ENCODE measurements at regions of chr6 and their contacts with region 1.

Region 1: DNA sequence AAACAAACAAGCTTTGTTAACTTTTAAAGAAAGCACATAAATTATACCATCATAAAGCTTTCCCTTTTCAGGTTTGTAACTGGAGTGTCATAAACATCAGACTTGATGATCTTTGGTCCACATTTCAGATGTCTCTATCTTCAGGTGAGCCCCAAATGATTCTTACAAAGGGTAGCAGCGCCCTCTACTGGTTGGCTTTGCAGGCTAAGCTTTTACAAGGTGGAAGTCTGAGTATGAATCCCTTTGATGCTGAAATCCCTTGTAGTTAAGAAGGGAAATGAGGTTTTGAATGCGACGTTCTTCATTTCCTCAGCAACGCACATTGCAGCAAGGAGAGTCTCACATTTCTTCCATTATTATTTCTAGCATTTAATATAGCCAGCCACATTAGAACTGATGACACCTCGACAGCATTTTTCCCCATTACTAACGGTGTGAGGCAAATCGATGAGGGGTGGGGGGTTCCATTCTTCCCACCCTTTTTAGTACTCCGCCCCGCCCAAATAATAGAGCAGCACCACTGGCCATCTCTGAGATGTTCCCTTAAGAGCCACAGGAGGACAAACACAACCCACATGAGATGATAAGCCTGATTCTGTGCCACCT is 126.3 kb upstream of the NT5E start:
- DNase-seq: peak; percentile 46 to 72
- H3K4me3 ChIP-seq: no peak overlapping the region
- H3K27ac ChIP-seq: no peak overlapping the region
- H3K4me1 ChIP-seq: no peaks in the 10 kb centered on the region
- H3K27me3 ChIP-seq: no peaks in the 10 kb centered on the region
- CTCF ChIP-seq: peak; percentile 86

Region 2: GRCh38 chr6:83884523-83884922 is 1439.0 kb before region 1 on chr6:
- CTCF ChIA-PET with region 1: no interaction called
- POLR2A ChIA-PET with region 1: no interaction called
- intact Hi-C with region 1: loop called (anchors 5 kb)
- DNase-seq: peak in 1 of 2 experiments; percentile 59
- H3K4me3 ChIP-seq: no peak overlapping the region
- H3K27ac ChIP-seq: no peak overlapping the region
- H3K4me1 ChIP-seq: no peaks in the 10 kb centered on the region
- H3K27me3 ChIP-seq: no peaks in the 10 kb centered on the region
- CTCF ChIP-seq: peak; percentile 71

Region 3: GRCh38 chr6:84243240-84243639 is 1080.3 kb before region 1 on chr6:
- CTCF ChIA-PET with region 1: no interaction called
- POLR2A ChIA-PET with region 1: no interaction called
- intact Hi-C with region 1: loop called (anchors 5 kb)
- DNase-seq: no peak
- H3K4me3 ChIP-seq: no peak overlapping the region
- H3K27ac ChIP-seq: no peak overlapping the region
- H3K4me1 ChIP-seq: no peaks in the 10 kb centered on the region
- H3K27me3 ChIP-seq: no peaks in the 10 kb centered on the region
- CTCF ChIP-seq: peak; percentile 33; the same call in 1 of the 2 replicates

Region 4: GRCh38 chr6:84422380-84422968 is 901.1 kb before region 1 on chr6:
- CTCF ChIA-PET with region 1: no interaction called
- POLR2A ChIA-PET with region 1: no interaction called
- intact Hi-C with region 1: loop called (anchors 2 kb)
- DNase-seq: no peak
- H3K4me3 ChIP-seq: no peak overlapping the region
- H3K27ac ChIP-seq: no peak overlapping the region
- H3K4me1 ChIP-seq: no peaks in the 10 kb centered on the region
- H3K27me3 ChIP-seq: no peaks in the 10 kb centered on the region
- CTCF ChIP-seq: peak; percentile 30; the same call in 1 of the 2 replicates

Region 5: GRCh38 chr6:84975316-84975715 is 348.2 kb before region 1 on chr6:
- CTCF ChIA-PET with region 1: no interaction called
- POLR2A ChIA-PET with region 1: interaction called, 12 read pairs
- intact Hi-C with region 1: no loop called
- DNase-seq: no peak
- H3K4me3 ChIP-seq: no peak overlapping the region
- H3K27ac ChIP-seq: no peak overlapping the region
- H3K4me1 ChIP-seq: no peaks in the 10 kb centered on the region
- H3K27me3 ChIP-seq: no peaks in the 10 kb centered on the region
- CTCF ChIP-seq: no peak

Region 6: GRCh38 chr6:85004361-85004995 is 319.1 kb before region 1 on chr6:
- CTCF ChIA-PET with region 1: no interaction called
- POLR2A ChIA-PET with region 1: no interaction called
- intact Hi-C with region 1: no loop called
- DNase-seq: no peak
- H3K4me3 ChIP-seq: no peak overlapping the region
- H3K27ac ChIP-seq: no peak overlapping the region
- H3K4me1 ChIP-seq: no peaks in the 10 kb centered on the region
- H3K27me3 ChIP-seq: no peaks in the 10 kb centered on the region
- CTCF ChIP-seq: no peak

Region 7: DNA sequence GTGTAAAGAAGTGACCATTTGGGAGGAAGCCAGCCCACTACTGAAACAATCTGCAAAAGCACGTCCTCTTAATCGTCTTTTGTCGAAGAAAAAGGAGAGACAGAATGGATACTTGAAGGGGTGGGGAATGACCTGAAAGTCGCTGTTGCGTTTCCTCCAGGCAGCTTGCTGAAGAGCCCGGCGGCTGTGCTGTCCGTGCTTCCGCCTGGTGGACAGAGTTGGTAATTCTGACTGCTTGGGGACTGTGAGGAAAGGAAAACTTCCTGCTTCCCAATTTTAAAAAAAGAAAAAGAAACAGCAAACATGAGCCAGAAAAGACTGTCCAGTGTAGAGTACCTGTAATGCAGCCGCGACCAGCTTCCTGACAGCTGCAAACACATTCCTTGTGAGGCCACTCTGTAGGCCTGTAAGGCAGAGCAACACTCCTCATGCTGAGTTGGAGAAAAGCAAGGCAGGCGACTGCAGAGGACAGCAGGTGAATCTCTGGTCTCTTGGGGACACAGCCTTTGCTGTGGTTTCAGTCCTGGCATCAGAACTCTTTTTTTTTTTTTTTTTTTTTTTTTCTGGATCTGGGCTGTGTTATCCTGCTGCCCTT is 308.0 kb before region 1 on chr6:
- CTCF ChIA-PET with region 1: no interaction called
- POLR2A ChIA-PET with region 1: no interaction called
- intact Hi-C with region 1: loop called (anchors 5 kb)
- DNase-seq: peak in 1 of 2 experiments; percentile 56
- H3K4me3 ChIP-seq: no peak overlapping the region
- H3K27ac ChIP-seq: no peak overlapping the region
- H3K4me1 ChIP-seq: no peaks in the 10 kb centered on the region
- H3K27me3 ChIP-seq: no peaks in the 10 kb centered on the region
- CTCF ChIP-seq: peak; percentile 74

Region 8: GRCh38 chr6:85537055-85537494 is 213.5 kb after region 1 on chr6:
- CTCF ChIA-PET with region 1: no interaction called
- POLR2A ChIA-PET with region 1: no interaction called
- intact Hi-C with region 1: no loop called
- DNase-seq: no peak
- H3K4me3 ChIP-seq: no peak overlapping the region
- H3K27ac ChIP-seq: peak overlapping the region; percentile 35; the same call in 1 of the 2 replicates
- H3K4me1 ChIP-seq: peaks cover 11% of the 10 kb centered on the region
- H3K27me3 ChIP-seq: no peaks in the 10 kb centered on the region
- CTCF ChIP-seq: peak; percentile 77